ENCODE measurements at regions of chr4 and their contacts with region 1.

Region 1: GRCh38 chr4:5009796-5010195 is 9.5 kb downstream of the CYTL1 start:
- DNase-seq: no peak
- H3K4me3 ChIP-seq: no peak overlapping the region
- H3K27ac ChIP-seq: no peak overlapping the region
- H3K4me1 ChIP-seq: no peaks in the 10 kb centered on the region
- H3K27me3 ChIP-seq: peaks cover 4% of the 10 kb centered on the region
- CTCF ChIP-seq: no peak

Region 2: GRCh38 chr4:4960574-4960973 is 49.2 kb before region 1 on chr4:
- CTCF ChIA-PET with region 1: no interaction called
- dilution Hi-C with region 1: loop called (anchors 5 kb)
- in situ Hi-C with region 1: no loop called
- intact Hi-C with region 1: no loop called
- DNase-seq: no peak
- H3K4me3 ChIP-seq: no peak overlapping the region
- H3K27ac ChIP-seq: no peak overlapping the region
- H3K4me1 ChIP-seq: no peaks in the 10 kb centered on the region
- H3K27me3 ChIP-seq: no peaks in the 10 kb centered on the region
- CTCF ChIP-seq: no peak